ENCODE measurements at regions of chr5 and their contacts with region 1.

Region 1: DNA sequence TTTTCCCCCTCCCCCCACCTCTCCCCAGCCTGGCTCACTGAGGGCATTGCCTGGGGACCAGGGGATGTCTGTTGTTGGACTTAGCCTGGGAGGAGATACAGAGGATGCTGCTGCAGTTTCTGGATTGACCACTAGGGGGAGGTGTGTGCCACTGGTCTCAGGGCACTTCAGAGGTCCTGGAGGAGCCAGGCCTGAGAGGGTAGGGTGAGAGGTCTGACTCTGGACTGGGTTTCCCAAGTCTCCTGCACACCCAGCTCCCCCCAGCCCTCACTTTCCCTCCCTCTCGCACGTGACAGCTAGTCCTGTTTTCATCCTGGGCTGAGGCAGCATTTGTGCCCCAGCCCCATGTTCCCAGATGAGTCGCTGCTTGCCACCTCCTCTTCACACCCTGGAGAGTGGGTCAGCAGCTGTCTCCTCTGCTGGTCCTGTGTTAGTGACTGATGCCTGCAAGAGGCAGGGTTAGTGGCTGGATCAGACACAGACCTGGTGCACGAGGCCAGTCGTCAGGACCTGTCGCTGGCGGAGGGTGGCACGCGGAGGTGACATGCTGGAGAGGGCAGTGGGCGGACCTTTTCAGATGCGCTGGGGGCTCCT is 4.4 kb downstream of the IL3 start:
- DNase-seq: peak; percentile 81
- ATAC-seq: peak; percentile 85
- H3K4me3 ChIP-seq: no peak overlapping the region
- H3K27ac ChIP-seq: no peak overlapping the region
- H3K4me1 ChIP-seq: no peaks in the 10 kb centered on the region
- H3K27me3 ChIP-seq: no peaks in the 10 kb centered on the region
- CTCF ChIP-seq: peak; percentile 95

Region 2: GRCh38 chr5:132134384-132134783 is 69.5 kb after region 1 on chr5:
- CTCF ChIA-PET with region 1: no interaction called
- POLR2A ChIA-PET with region 1: no interaction called
- in situ Hi-C with region 1: no loop called
- intact Hi-C with region 1: loop called (anchors 2 kb)
- DNase-seq: no peak
- ATAC-seq: no peak; the same call in 1 of the 2 replicates
- H3K4me3 ChIP-seq: no peak overlapping the region
- H3K27ac ChIP-seq: no peak overlapping the region
- H3K4me1 ChIP-seq: no peaks in the 10 kb centered on the region
- H3K27me3 ChIP-seq: peaks cover 19% of the 10 kb centered on the region
- CTCF ChIP-seq: peak; percentile 40

Region 3: GRCh38 chr5:132369474-132370180 is 304.8 kb after region 1 on chr5 and contains the start of gene SLC22A5:
- CTCF ChIA-PET with region 1: no interaction called
- POLR2A ChIA-PET with region 1: no interaction called
- in situ Hi-C with region 1: no loop called
- intact Hi-C with region 1: loop called (anchors 10 kb)
- DNase-seq: no peak
- ATAC-seq: peak; percentile 96
- H3K4me3 ChIP-seq: peak within 1 kb of the TSS; percentile 66 to 79
- H3K27ac ChIP-seq: peak within 1 kb of the TSS; percentile 82
- H3K4me1 ChIP-seq: peaks cover 24% of the 10 kb centered on the region
- H3K27me3 ChIP-seq: no peaks in the 10 kb centered on the region
- CTCF ChIP-seq: no peak
- total RNA-seq, gene SLC22A5: 9.5 TPM

Measured in Panc1 (cell line).